Activated CD4-positive, alpha-beta T cell treated with anti-CD3 and anti-CD28 coated beads, Interleukin-2, amount 10 ng/mL, durations not matched to agents 7 days and 5 days (primary cell): ENCODE measurements at regions of chr5 and their contacts with region 1.

Region 1: GRCh38 chr5:170267431-170268152 is 30.0 kb downstream of the LCP2 start:
- DNase-seq: peak; percentile 87
- H3K4me3 Mint-ChIP-seq: peak overlapping the region; percentile 38
- H3K27ac Mint-ChIP-seq: peak overlapping the region; percentile 84
- H3K4me1 Mint-ChIP-seq: peaks cover 95% of the 10 kb centered on the region
- H3K27me3 Mint-ChIP-seq: no peaks in the 10 kb centered on the region

Region 2: GRCh38 chr5:170256571-170256970 is 11.0 kb before region 1 on chr5:
- CTCF ChIA-PET with region 1: interaction called, 21 read pairs
- POLR2A ChIA-PET with region 1: interaction called, 3 read pairs
- DNase-seq: no peak
- H3K4me3 Mint-ChIP-seq: no peak overlapping the region
- H3K27ac Mint-ChIP-seq: peak overlapping the region; percentile 28
- H3K4me1 Mint-ChIP-seq: peaks cover 78% of the 10 kb centered on the region
- H3K27me3 Mint-ChIP-seq: no peaks in the 10 kb centered on the region

Region 3: GRCh38 chr5:170293273-170293672 is 25.7 kb after region 1 on chr5:
- CTCF ChIA-PET with region 1: interaction called, 18 read pairs
- POLR2A ChIA-PET with region 1: interaction called, 6 read pairs
- DNase-seq: peak; percentile 60
- H3K4me3 Mint-ChIP-seq: peak overlapping the region; percentile 96
- H3K27ac Mint-ChIP-seq: peak overlapping the region; percentile 79
- H3K4me1 Mint-ChIP-seq: peaks cover 71% of the 10 kb centered on the region
- H3K27me3 Mint-ChIP-seq: no peaks in the 10 kb centered on the region

Region 4: GRCh38 chr5:170333161-170333910 is 65.7 kb after region 1 on chr5:
- CTCF ChIA-PET with region 1: interaction called, 28 read pairs
- POLR2A ChIA-PET with region 1: interaction called, 12 read pairs
- DNase-seq: peak; percentile 65
- H3K4me3 Mint-ChIP-seq: peak overlapping the region; percentile 66
- H3K27ac Mint-ChIP-seq: no peak overlapping the region
- H3K4me1 Mint-ChIP-seq: peaks cover 28% of the 10 kb centered on the region
- H3K27me3 Mint-ChIP-seq: no peaks in the 10 kb centered on the region

Region 5: DNA sequence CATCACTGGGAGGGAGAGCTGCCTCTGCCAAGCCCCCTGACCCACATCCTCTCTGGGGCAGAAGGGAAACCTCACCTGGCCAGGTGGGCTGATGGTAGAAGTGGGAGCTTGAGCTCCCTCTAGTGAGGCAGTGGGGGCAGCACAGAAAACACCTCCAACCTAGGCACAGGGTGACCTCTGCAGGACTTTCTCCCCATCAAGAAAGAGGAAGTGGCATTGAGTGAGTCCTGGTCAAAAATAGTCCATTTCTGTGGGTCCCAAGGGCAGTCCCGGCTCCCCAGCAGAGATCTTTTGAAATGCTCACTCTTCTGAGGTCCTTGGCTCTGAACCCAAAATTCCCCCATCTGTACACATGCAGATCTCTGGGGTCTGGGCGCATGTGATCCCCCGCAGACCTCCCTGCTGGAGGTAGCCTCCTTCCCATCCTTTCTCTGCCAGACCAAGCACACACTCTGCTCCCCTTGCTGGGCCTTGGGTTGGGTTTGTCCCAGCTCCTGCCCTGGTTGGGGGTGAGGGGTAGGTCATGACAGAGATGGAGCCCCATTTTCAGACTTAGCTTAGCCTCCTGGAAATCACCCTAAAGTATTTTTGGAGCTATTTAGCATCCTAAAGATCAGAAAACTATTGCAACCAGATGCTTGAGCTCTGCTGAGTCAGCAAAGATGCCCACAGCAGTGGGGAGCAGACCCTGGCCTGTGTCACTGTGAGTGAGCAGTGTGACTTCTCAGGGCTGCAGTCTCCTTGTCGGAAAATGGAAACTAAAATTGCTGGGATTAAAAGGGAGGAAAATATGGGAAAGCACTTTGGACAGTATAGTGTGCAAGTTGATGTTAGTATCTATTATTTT is 71.6 kb after region 1 on chr5:
- CTCF ChIA-PET with region 1: interaction called, 28 read pairs
- POLR2A ChIA-PET with region 1: interaction called, 12 read pairs
- DNase-seq: peak; percentile 72
- H3K4me3 Mint-ChIP-seq: no peak overlapping the region
- H3K27ac Mint-ChIP-seq: peak overlapping the region; percentile 25
- H3K4me1 Mint-ChIP-seq: peaks cover 39% of the 10 kb centered on the region
- H3K27me3 Mint-ChIP-seq: peaks cover 2% of the 10 kb centered on the region